ENCODE measurements at regions of chr17 and their contacts with region 1.

Region 1: DNA sequence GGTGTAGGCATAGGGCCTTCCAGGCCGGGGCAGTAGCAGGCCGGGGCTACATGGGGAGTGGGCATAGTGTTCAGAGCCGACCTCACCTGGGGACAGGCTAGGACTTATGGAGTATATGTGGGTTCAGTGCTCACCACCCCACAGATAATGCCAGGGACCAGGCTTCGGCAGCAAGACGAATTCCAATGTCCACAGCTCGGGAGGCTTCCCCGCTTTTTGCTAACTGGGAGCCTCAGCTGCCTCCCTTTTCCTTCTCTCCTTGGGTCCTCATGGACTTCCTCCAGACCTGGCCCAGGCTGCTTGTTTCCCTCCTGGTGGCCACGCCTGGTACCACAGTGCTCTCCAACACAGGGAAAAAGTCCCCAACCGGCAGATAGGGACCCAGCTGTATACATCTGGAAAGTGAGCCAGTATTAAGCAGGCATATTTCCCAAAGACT is 20.1 kb upstream of the SLC46A1 start:
- DNase-seq: peak; percentile 47 to 58
- ATAC-seq: peak; percentile 89 to 99
- H3K4me3 ChIP-seq: no peak overlapping the region
- H3K27ac ChIP-seq: no peak overlapping the region
- H3K4me1 ChIP-seq: no peaks in the 10 kb centered on the region
- CTCF ChIP-seq: no peak
- EP300 ChIP-seq: no peak
- POLR2A ChIP-seq: no peak
- RAD21 ChIP-seq: peak in 1 of 2 experiments; percentile 37; a peak in 2 of 5 replicates

Region 2: DNA sequence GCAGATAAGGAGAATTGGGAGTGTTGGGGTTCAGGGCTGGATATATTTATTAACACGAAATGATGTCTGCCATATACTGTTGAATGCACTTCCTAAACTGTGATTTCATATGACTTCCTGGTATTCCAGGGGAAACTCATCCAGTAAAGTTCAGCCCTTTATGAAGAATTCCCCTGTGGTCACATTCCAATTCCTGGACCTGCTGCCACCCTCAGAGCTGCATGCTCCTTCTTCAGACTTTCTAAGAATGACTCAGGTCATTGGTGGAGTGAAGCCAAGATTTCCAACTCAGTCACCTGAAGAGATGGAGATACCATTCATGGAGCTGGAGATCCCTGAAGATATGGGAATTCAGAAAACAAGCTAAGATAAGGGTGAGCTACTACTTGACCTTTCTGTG is 221.3 kb before region 1 on chr17:
- CTCF ChIA-PET with region 1: no interaction called
- POLR2A ChIA-PET with region 1: interaction called, 11 read pairs
- DNase-seq: peak in 1 of 2 experiments; percentile 39
- ATAC-seq: peak; percentile 53 to 57; a peak in 5 of 6 replicates
- H3K4me3 ChIP-seq: no peak overlapping the region
- H3K27ac ChIP-seq: no peak overlapping the region
- H3K4me1 ChIP-seq: peaks cover 5% of the 10 kb centered on the region; the same call in 2 of the 3 replicates
- CTCF ChIP-seq: no peak
- EP300 ChIP-seq: no peak
- POLR2A ChIP-seq: no peak
- RAD21 ChIP-seq: no peak

Region 3: DNA sequence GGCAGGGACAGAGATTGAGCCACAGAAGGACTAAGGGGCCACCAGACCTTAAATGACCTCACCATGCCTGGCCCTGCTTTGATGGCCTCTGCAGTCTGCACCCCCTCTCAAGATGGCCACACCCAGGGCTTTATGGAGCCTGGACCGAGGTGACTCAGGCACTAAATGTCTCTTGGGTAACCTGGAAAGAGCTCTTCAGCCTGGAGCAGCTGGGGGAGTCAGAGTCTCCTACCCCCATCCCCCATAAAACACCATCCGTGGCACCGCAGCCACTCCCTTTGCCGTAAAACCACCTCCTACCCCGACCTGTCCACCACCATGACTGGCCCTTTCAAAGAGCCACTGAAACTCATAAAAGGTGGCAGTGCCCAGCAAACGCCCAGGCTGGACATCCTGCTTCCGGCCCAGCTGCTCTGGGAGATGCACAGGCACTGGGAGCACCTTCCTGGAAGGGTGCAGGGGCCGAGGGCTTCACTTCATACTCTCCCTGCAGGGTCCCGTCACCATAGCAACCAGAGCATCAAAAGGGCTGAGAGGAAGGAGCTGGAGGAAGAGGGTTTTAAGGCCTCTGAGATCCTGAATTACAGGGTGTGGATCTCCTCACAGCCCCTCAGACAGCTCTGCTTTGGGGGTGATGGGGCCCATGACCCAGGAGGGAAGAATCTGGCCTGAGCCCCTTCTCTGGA is 102.4 kb after region 1 on chr17:
- CTCF ChIA-PET with region 1: no interaction called
- POLR2A ChIA-PET with region 1: no interaction called
- DNase-seq: no peak
- ATAC-seq: peak in 1 of 2 experiments; percentile 31; a peak in 2 of 6 replicates
- H3K4me3 ChIP-seq: no peak overlapping the region
- H3K27ac ChIP-seq: peak overlapping the region in 1 of 2 experiments; percentile 7; a peak in 3 of 6 replicates
- H3K4me1 ChIP-seq: peaks cover 31% of the 10 kb centered on the region
- CTCF ChIP-seq: no peak
- EP300 ChIP-seq: no peak
- POLR2A ChIP-seq: no peak
- RAD21 ChIP-seq: no peak